Left lung (tissue), 14 donors: ENCODE measurements at regions of chr22 and their contacts with region 1.

Region 1: DNA sequence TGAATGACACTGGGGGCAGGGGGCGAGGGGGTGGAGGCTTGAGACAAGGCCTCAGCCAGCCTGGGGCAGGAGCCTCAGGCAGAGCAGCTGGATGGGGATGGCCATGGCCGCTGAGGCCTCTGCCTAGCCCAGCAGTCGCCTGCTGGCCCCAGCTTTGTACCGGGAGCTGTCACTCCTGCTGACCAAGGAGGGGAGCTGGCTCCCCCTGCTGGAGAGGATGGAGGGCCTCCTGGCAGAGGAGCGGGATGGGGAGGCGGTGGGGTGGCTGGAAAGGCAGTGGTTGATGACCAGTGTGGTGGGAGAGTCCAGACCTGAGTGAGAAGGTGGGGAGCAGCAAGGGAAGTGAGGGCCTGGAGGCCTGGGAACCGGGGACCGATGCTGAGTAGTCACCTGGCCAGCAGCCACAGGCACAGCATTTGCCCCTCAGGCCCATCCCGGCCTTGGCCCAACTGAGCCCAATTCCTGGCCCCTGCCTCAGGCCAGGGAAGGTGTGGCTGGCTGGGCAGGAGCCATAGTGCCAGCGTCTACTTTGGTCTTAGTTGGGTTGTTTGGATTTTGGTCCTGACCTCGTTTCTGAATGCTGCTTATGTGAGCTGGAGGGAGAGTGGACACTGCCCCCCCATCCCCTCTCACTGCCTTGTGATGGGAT is 6.0 kb upstream of the SUSD2 start:
- DNase-seq: peak in 3 of 4 donors; percentile 78 to 93 (median 80)
- ATAC-seq: peak; percentile 79
- H3K4me3 ChIP-seq: no peak overlapping the region
- H3K27ac ChIP-seq: peak overlapping the region in 1 of 2 donors; percentile 24
- H3K4me1 ChIP-seq: peaks cover 0 to 9% of the 10 kb centered on the region in 2 donors
- H3K27me3 ChIP-seq: no peaks in the 10 kb centered on the region
- CTCF ChIP-seq: peak; percentile 66 to 84

Region 2: GRCh38 chr22:24117942-24118341 is 57.3 kb before region 1 on chr22:
- intact Hi-C with region 1: loop called in 1 of 2 experiments (anchors 10 kb)
- DNase-seq: peak in 1 of 4 donors; percentile 36
- ATAC-seq: no peak
- H3K4me3 ChIP-seq: no peak overlapping the region
- H3K27ac ChIP-seq: no peak overlapping the region
- H3K4me1 ChIP-seq: peaks cover 0 to 3% of the 10 kb centered on the region in 2 donors
- H3K27me3 ChIP-seq: no peaks in the 10 kb centered on the region
- CTCF ChIP-seq: no peak